PC-3 (cell line): ENCODE measurements at regions of chrX and their contacts with region 1.

Region 1: GRCh38 chrX:72540318-72540717 is 32.3 kb downstream of the HDAC8 start:
- DNase-seq: peak; percentile 44
- ATAC-seq: no peak
- H3K4me3 ChIP-seq: no peak overlapping the region
- H3K27ac ChIP-seq: no peak overlapping the region
- H3K4me1 ChIP-seq: no peaks in the 10 kb centered on the region
- H3K27me3 ChIP-seq: no peaks in the 10 kb centered on the region
- CTCF ChIP-seq: peak; percentile 56

Region 2: DNA sequence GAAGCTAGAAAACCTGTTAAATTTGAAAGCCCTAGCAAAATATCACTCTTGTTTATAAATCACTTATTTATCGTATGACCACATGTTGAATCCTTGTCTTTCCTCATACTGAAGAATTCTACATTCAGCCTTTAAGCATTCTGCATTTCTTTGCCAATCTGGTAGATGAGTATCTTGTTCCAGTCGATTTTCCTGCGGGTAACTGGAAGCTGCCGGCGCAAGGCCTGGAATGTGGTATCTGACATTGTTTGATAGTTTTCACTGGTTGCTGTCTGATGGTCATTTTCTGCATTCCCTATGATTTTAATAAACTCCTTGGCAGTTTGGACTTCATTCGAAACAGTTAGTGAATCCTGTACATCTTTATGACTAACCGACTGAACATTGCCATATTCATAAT is 187.5 kb after region 1 on chrX:
- CTCF ChIA-PET with region 1: interaction called, 10 read pairs
- POLR2A ChIA-PET with region 1: no interaction called
- intact Hi-C with region 1: no loop called
- DNase-seq: no peak
- ATAC-seq: no peak
- H3K4me3 ChIP-seq: no peak overlapping the region
- H3K27ac ChIP-seq: no peak overlapping the region
- H3K4me1 ChIP-seq: no peaks in the 10 kb centered on the region
- H3K27me3 ChIP-seq: no peaks in the 10 kb centered on the region
- CTCF ChIP-seq: no peak